ENCODE measurements at regions of chr19 and their contacts with region 1.

Region 1: GRCh38 chr19:19531951-19532805 is 3.5 kb downstream of the YJEFN3 start:
- DNase-seq: peak in 1 of 2 donors; percentile 90
- H3K4me3 ChIP-seq: peak overlapping the region in 1 of 2 donors; percentile 24
- H3K27ac ChIP-seq: no peak overlapping the region
- H3K4me1 ChIP-seq: peaks cover 0 to 2% of the 10 kb centered on the region in 2 donors
- H3K27me3 ChIP-seq: no peaks in the 10 kb centered on the region
- CTCF ChIP-seq: peak; percentile 91 to 99 (median 97)

Region 2: DNA sequence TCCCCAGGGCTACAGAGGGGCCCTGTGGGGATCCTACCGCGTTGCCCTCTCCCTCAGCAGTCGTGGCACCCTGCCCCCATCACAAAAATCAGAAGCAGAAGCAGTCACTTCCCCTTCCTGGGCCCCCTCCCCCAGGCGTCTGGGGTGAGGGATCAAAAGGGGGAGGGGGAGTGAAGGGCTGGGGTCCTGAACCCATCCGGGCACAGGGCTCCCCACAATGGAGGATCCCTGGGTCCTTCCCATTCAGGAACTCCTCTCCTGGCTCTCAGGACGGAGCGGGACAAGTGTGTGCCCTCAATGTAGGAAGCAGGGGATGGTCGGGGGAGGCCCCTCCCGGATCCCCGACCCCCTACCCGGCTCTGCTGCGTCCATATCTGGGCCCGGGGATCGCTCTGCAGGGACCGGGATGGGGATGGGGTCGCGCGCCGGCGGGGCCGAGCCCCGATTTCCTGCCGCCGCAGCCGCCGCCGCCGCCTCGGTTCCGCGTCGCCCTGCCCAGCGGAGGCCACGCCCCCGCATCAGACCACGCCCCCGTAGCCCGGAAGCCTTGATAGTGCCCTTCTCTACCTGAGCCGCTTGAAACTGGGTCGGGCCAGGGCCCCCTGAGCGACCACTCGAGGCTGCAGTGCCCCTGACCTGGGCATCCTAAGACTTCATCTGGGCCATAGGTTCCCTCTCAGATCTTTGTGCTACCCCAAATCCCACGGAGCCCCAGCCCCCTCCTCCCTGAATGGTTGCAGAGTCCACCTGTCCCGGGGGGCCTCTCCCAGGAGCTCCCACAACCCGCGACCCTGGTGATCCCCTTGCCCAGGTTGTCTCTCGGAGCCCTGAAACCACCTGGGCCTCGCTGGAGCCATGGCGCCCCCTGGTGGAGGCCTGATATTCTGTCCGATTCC is 111.2 kb after region 1 on chr19 and contains the start of gene GMIP:
- intact Hi-C with region 1: loop called (anchors 1 kb)
- DNase-seq: peak in 1 of 2 donors; percentile 83
- H3K4me3 ChIP-seq: peak within 1 kb of the TSS; percentile 90 to 98
- H3K27ac ChIP-seq: peak within 1 kb of the TSS; percentile 49 to 61
- H3K4me1 ChIP-seq: peaks cover 0 to 10% of the 10 kb centered on the region in 2 donors
- H3K27me3 ChIP-seq: no peaks in the 10 kb centered on the region
- CTCF ChIP-seq: peak; percentile 57 to 96 (median 87)
- total RNA-seq, gene GMIP: 3.9 TPM

Region 3: DNA sequence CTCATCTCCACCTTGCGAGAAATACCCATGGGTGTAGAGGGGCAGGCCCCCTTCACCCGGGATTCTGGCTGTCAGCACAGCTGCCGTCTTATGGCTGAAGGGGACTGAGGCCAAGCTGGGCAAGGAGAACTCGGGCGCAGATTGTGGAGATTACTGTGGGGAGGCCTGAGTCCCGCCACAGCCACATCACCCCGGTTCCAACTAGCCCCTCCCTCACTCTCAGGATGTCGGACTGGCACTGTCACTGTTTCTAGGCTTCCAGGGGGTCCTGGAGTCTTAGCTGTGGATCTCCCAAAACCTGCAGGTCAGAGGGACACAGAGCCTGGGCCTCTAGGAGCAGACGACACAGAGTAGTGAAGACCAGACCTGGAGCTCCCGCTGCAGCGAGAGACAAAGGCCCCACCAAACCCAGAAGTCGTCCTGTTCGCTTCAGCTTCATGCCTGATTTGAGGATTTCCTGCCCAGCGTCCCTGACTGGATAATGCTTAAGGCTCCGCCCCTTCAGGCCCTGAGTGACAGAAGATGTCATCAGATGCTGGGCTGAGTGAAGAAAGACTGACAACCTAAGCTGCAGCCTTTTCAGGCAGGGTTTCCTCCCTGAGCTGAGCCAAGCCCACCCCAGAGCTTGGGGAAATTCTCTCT is 424.4 kb after region 1 on chr19:
- intact Hi-C with region 1: loop called (anchors 1 kb)
- DNase-seq: no peak
- H3K4me3 ChIP-seq: no peak overlapping the region
- H3K27ac ChIP-seq: no peak overlapping the region
- H3K4me1 ChIP-seq: no peaks in the 10 kb centered on the region
- H3K27me3 ChIP-seq: no peaks in the 10 kb centered on the region
- CTCF ChIP-seq: no peak

Region 4: DNA sequence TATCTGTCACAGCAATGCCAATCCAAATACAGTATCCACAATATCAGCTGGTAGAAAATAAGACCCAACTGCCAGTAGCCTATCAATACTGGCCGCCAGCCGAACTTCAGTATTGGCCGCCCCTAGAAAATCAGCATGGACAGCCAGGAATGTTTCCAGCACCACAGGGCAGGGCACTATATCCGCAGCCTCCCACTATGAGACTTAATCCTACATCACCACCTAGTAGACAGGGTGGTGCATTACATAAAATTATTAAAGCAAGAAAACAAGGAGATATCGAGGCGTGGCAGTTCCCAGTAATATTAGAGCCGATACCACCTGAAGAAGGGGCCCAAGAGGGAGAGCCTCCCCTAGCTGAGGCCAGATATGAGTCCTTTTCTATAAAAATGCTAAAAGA is 746.2 kb after region 1 on chr19:
- intact Hi-C with region 1: loop called (anchors 5 kb)
- DNase-seq: no peak
- H3K4me3 ChIP-seq: no peak overlapping the region
- H3K27ac ChIP-seq: no peak overlapping the region
- H3K4me1 ChIP-seq: no peaks in the 10 kb centered on the region
- H3K27me3 ChIP-seq: no peaks in the 10 kb centered on the region
- CTCF ChIP-seq: peak in 2 of 3 experiments; percentile 35 to 84

Measured in ascending aorta (tissue), 2 donors.